ENCODE measurements at regions of chr3 and their contacts with region 1.

Region 1: DNA sequence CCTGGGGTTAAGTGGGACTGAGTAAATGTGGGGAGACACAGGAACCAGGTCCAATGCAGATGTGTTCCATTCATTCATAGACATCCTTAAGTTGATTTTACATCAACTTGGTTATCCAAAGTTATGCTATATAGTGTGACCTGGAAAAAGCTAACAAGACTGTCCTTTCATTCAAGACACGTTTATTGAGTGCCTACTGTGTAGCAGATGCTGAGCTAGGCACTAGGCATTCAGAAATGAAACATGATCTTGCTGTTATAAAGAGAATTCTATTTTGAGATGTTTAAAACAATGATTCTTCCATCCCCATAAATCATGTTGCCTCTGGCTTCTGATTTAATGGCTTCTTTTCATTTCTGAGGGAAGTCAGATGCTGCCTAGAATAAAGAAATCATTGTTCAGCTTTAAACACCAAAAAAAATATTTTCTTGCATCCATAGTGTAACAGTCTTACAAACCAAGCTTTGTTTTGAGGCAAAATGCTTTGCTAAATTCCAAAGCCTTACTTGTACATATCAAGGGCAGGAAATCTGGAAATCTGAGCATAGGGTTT is 620.9 kb upstream of the UBE2E2 start:
- DNase-seq: no peak
- ATAC-seq: no peak
- H3K4me3 ChIP-seq: no peak overlapping the region
- H3K27ac ChIP-seq: no peak overlapping the region
- H3K4me1 ChIP-seq: no peaks in the 10 kb centered on the region
- H3K27me3 ChIP-seq: peaks cover 0 to 13% (median 0%) of the 10 kb centered on the region in 7 donors
- CTCF ChIP-seq: no peak

Region 2: DNA sequence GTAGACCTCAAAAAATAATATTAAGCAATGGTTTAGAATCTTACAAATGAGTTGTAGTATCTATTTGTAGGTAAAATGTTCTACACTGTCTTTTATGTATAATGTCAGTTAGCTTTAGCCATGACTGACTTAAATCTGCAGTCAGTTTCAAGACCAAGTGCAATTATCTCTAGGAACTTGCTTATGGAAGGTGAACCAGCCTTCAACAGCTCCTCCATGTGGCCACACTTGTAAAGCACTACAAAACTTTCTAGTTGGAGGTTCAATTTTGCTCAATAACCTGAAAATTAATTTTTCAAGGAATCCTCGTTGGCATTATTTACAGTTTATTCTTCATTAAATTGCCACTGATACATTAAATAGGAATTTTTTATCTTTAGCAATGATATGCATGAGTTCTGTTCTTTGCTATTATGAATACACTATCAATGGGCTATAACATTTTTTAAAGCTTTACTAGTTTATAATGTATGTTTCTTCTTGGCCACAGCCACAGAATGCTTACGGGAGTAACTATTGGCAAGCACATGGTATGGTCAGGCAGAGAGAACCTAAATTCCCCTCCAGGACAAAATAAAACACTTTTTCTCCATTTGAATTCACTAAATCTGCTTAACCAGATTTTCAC is 305.5 kb after region 1 on chr3:
- intact Hi-C with region 1: loop called in 2 of 10 experiments (anchors 10 kb)
- DNase-seq: no peak
- ATAC-seq: no peak
- H3K4me3 ChIP-seq: no peak overlapping the region
- H3K27ac ChIP-seq: no peak overlapping the region
- H3K4me1 ChIP-seq: peaks cover 0 to 3% (median 0%) of the 10 kb centered on the region in 9 donors
- H3K27me3 ChIP-seq: peaks cover 0 to 10% (median 0%) of the 10 kb centered on the region in 7 donors
- CTCF ChIP-seq: peak in 7 of 9 donors; percentile 31 to 61 (median 50)

Region 3: DNA sequence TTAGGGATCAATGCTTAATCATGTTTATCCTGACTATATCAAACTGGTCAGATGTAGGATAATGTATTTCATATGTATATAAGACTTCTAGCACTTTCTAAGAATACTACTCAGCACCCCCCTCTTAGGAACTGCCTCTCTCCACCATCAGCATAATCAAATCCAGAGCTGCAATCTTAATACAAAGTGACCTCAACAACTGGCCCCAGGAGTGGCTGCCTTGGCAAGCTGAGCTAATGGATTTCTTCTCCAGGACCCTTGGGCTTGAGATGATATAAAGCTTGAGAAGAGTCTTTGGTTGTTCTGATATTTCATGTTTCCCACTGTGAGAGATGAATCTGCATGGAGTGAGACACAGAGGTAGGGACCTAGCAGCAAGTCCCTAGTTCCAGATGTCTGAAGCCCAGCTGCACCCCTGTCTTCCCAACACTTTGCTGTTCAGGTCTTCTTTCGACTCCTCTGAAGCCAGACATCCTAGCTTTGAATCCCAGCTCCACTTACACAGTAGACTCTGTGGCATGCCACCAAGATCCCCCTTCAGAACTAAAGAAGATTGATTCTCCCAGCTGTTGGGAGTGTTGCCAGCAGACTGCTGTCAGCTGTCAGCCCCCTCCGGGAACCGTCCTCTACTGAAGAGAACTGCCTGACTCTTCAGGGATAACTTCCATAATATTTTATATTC is 311.5 kb after region 1 on chr3:
- intact Hi-C with region 1: loop called in 2 of 10 experiments (anchors 10 kb)
- DNase-seq: peak in 1 of 2 donors; percentile 10
- ATAC-seq: peak in 4 of 8 donors; percentile 19 to 42 (median 33)
- H3K4me3 ChIP-seq: no peak overlapping the region
- H3K27ac ChIP-seq: no peak overlapping the region
- H3K4me1 ChIP-seq: peaks cover 0 to 6% (median 0%) of the 10 kb centered on the region in 9 donors
- H3K27me3 ChIP-seq: peaks cover 0 to 10% (median 0%) of the 10 kb centered on the region in 7 donors
- CTCF ChIP-seq: no peak